Caco-2 (cell line): ENCODE measurements at regions of chr4 and their contacts with region 1.

Region 1: DNA sequence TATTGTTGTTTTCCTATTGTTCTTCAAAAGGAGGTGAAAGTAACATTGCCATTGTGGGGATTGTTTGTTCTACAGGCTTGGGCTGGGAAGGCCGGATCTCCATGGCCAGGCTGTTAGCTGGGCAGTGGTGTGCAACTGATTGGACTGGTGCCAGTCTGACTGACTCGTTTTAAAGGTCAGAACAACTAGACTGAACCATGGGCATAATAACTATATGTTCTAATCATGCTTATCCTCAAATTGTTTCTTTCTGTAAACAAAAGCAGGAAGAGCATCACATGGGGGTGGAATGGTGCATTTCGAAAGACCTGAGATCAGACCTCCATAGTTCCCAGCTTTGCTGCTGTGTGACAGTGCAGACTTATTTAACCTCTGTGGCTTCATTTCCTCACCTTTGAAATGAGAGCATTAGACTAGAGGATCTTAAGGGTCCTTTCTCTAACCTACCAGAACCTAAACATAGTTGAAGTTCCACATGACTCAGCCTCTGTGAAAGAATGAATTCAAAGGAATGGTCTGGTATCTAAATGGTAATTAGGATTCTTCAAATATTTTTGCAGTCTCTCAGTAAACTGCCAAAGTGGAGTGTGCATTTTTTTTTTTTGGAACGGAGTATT is 66.7 kb upstream of the PGRMC2 start:
- DNase-seq: peak in 1 of 2 experiments; percentile 48
- H3K4me3 ChIP-seq: no peak overlapping the region
- H3K4me3 Mint-ChIP-seq: peak overlapping the region; percentile 34
- H3K27ac Mint-ChIP-seq: peak overlapping the region; percentile 69
- H3K4me1 ChIP-seq: peaks cover 72% of the 10 kb centered on the region
- H3K4me1 Mint-ChIP-seq: peaks cover 30% of the 10 kb centered on the region
- H3K27me3 ChIP-seq: no peaks in the 10 kb centered on the region
- H3K27me3 Mint-ChIP-seq: no peaks in the 10 kb centered on the region
- CTCF ChIP-seq: no peak

Region 2: GRCh38 chr4:128107766-128108165 is 246.5 kb before region 1 on chr4:
- CTCF ChIA-PET with region 1: no interaction called
- POLR2A ChIA-PET with region 1: no interaction called
- intact Hi-C with region 1: no loop called
- DNase-seq: no peak
- H3K4me3 ChIP-seq: no peak overlapping the region
- H3K4me3 Mint-ChIP-seq: no peak overlapping the region
- H3K27ac Mint-ChIP-seq: no peak overlapping the region
- H3K4me1 ChIP-seq: no peaks in the 10 kb centered on the region
- H3K4me1 Mint-ChIP-seq: no peaks in the 10 kb centered on the region
- H3K27me3 ChIP-seq: no peaks in the 10 kb centered on the region
- H3K27me3 Mint-ChIP-seq: no peaks in the 10 kb centered on the region
- CTCF ChIP-seq: no peak

Region 3: DNA sequence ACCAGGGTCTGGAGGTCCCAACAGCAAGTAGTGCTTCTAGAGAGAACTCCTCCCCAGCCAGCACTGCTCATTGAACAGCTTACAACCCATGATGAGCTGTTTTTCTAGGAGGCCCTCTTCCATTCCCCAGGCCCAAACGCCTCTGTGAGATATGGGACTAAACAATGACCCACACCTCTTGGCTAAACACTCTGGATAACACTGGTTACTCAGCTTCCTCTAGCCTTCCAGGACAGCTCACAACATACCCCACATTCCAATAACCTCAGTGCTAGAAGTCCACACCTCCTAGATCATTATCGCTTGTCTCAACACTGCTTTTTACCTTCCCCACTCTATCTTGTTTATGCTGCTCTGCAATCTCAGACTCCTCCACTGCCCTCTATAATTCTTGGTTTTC is 31.3 kb before region 1 on chr4:
- CTCF ChIA-PET with region 1: no interaction called
- POLR2A ChIA-PET with region 1: no interaction called
- intact Hi-C with region 1: loop called (anchors 2 kb)
- DNase-seq: peak; percentile 73 to 82
- H3K4me3 ChIP-seq: no peak overlapping the region
- H3K4me3 Mint-ChIP-seq: no peak overlapping the region
- H3K27ac Mint-ChIP-seq: no peak overlapping the region
- H3K4me1 ChIP-seq: peaks cover 43% of the 10 kb centered on the region
- H3K4me1 Mint-ChIP-seq: peaks cover 5% of the 10 kb centered on the region
- H3K27me3 ChIP-seq: no peaks in the 10 kb centered on the region
- H3K27me3 Mint-ChIP-seq: no peaks in the 10 kb centered on the region
- CTCF ChIP-seq: no peak

Region 4: GRCh38 chr4:128385683-128386304 is 31.5 kb after region 1 on chr4:
- CTCF ChIA-PET with region 1: no interaction called
- POLR2A ChIA-PET with region 1: no interaction called
- intact Hi-C with region 1: loop called (anchors 1 kb)
- DNase-seq: no peak
- H3K4me3 ChIP-seq: no peak overlapping the region
- H3K4me3 Mint-ChIP-seq: no peak overlapping the region
- H3K27ac Mint-ChIP-seq: no peak overlapping the region
- H3K4me1 ChIP-seq: peaks cover 32% of the 10 kb centered on the region
- H3K4me1 Mint-ChIP-seq: peaks cover 8% of the 10 kb centered on the region
- H3K27me3 ChIP-seq: no peaks in the 10 kb centered on the region
- H3K27me3 Mint-ChIP-seq: no peaks in the 10 kb centered on the region
- CTCF ChIP-seq: no peak

Region 5: DNA sequence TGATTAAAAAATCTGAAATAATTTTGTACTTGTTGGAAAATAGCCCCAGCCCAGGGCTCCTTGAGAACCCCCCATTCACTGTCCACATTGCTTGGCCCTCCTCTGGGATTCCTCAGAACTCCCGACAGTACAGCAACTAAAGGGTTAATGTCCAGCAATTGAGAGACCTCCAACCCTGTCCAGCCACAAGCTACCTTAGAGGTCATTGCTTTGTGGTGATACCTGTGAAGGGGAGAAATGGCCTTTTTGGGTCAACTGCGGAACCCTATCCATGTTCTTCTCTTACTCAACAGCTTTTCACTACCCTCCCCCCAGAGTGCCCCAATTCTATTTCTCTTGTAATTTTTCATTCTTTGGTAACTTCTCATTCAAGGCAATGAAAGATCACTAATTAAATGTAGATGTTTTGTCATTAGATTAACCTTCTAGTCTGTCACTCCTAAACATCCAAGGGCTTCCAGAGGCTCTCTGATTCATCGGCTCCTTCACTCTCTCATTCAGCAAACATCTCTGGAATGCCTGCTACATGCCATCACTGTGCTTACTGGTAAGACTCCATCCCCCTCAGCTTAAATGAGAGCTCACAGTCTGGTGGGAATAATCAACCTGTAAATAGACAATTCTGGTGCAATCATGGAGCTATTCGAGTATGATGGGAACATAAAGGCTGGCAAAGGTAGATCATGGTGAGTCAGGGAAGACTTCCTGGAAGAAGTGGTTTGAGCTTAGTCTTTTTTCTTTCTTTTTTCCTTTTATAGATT is 174.7 kb after region 1 on chr4:
- CTCF ChIA-PET with region 1: no interaction called
- POLR2A ChIA-PET with region 1: no interaction called
- intact Hi-C with region 1: loop called (anchors 1 kb)
- DNase-seq: peak; percentile 69 to 80
- H3K4me3 ChIP-seq: no peak overlapping the region
- H3K4me3 Mint-ChIP-seq: peak overlapping the region; percentile 46
- H3K27ac Mint-ChIP-seq: peak overlapping the region; percentile 95
- H3K4me1 ChIP-seq: peaks cover 49% of the 10 kb centered on the region
- H3K4me1 Mint-ChIP-seq: peaks cover 37% of the 10 kb centered on the region
- H3K27me3 ChIP-seq: no peaks in the 10 kb centered on the region
- H3K27me3 Mint-ChIP-seq: no peaks in the 10 kb centered on the region
- CTCF ChIP-seq: no peak